AG04449 (cell line): ENCODE measurements at regions of chr12 and their contacts with region 1.

Region 1: DNA sequence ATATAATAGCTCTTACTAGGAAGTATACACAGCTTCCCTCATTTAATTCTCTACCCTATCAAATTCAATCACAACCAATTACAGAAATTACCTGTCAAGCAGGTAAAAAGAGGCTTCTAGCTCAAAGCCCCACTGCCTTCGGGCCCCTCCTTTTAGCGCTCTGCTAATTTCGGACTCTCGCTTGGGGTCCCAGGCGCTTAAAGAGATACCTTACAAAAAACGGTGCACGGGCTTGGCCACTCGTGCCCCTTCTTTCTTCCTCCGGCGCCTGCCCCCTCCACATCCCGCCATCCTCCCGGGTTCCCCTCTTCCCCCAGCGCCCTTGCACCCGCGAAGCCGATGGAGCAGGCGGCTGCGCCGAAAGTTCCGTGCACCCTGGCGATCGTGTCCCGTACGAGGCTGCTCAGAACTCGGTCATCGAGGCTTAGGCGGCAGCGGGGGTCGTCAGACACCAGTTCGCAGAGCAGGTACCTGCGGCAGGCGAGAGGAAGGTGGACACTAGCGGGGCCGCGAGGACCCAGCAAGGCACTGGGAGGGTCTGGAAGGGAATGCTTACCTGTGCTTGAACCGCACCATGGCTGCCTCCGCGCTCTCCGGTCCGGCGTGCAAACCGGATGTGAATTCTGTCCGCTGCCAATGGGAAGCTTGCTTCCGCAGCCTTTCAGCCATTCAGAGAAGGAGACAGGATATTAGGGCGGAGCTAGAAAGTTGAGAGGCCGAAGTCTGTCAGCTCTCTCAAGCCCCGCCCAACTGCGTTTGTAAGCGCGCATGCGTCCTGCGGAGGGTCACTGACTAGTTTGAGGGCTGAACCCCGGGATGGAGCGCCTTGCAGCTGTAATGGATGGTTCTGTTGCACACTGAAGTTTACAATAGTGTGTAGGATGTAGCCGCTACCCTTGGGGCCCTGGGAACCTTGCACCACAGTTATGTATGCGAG is at the start of gene POP5:
- DNase-seq: peak; percentile 84
- H3K4me3 ChIP-seq: peak within 1 kb of the TSS; percentile 98
- CTCF ChIP-seq: no peak

Region 2: DNA sequence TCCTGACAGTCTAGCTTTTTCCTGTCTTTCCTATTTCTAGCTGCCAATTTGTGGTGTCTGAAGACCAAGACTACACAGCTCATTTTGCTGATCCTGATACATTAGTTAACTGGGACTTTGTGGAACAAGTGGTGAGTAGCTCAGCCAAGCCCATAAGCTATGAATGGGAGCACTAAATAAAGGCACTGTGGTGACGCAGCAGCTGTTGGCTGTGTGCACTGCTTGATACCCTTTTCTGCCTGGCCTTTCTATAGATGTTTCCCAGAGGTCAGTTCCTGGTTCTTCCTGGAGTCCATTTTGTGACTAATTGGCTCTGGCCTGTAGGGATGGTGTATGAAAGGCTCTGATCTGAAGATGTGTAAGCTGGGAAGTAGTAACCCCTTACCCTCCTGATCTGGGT is 26.4 kb before region 1 on chr12:
- CTCF ChIA-PET with region 1: interaction called, 13 read pairs
- POLR2A ChIA-PET with region 1: no interaction called
- DNase-seq: no peak
- H3K4me3 ChIP-seq: no peak overlapping the region
- CTCF ChIP-seq: no peak

Region 3: GRCh38 chr12:120710031-120710804 is 129.2 kb after region 1 on chr12 and contains the start of gene UNC119B:
- CTCF ChIA-PET with region 1: interaction called, 29 read pairs
- POLR2A ChIA-PET with region 1: no interaction called
- DNase-seq: no peak
- H3K4me3 ChIP-seq: peak within 1 kb of the TSS; percentile 75
- CTCF ChIP-seq: no peak

Region 4: DNA sequence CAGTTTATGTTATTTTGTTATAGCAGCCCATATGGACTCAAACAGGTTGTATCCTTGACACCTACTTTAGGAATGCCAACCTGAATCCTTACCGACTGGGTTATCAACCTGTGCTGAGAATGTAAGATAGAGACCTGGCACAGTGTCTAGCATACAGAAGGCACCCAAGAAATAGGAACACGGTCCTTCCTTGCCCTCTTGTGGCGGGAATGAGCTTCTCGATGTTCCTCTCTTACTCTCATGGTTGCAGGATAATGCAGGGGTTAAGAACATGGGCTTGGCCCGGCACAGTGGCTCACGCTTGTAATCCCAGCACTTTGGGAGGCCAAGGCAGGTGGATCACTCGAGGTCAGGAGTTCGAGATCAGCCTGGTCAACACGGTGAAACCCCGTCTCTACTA is 428.7 kb after region 1 on chr12:
- CTCF ChIA-PET with region 1: interaction called, 36 read pairs
- POLR2A ChIA-PET with region 1: no interaction called
- DNase-seq: no peak
- H3K4me3 ChIP-seq: no peak overlapping the region
- CTCF ChIP-seq: peak; percentile 57

Region 5: DNA sequence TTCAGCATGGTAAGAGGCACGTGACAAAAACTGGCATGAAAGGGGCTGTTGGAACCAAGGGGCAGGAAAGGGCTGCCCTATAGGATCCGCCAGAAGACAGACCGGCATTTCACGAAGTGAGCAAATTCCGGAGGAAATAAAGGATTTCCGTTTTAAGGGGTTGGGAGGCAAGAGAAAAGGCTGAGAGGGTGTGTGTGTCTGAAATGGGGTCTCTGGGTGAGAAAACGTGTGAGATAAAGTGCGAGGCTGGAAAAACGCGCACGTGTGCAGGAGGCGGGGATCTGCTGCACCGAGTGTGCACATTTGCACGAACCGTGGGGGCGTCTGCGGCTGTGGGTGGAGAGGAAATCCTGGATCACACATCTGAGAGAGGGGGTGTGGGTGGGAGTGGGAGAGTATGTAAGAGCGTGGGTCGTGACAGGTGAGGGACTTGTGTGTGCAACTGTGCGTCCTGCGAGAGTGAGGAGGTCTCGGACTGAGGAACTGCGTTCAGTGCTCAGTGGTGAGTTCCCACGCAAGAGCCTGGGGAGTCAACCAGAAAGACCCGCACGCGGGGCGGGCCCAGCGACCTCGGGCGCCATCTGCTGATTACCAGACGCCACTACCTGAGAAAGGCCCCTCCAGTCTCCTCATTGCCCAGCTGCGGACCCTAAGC is 514.6 kb after region 1 on chr12:
- CTCF ChIA-PET with region 1: interaction called, 20 read pairs
- POLR2A ChIA-PET with region 1: no interaction called
- DNase-seq: no peak
- H3K4me3 ChIP-seq: peak overlapping the region; percentile 53
- CTCF ChIP-seq: peak; percentile 90

Region 6: GRCh38 chr12:121110211-121110940 is 529.3 kb after region 1 on chr12:
- CTCF ChIA-PET with region 1: interaction called, 45 read pairs
- POLR2A ChIA-PET with region 1: no interaction called
- DNase-seq: no peak
- H3K4me3 ChIP-seq: no peak overlapping the region
- CTCF ChIP-seq: peak; percentile 85